ENCODE measurements at regions of chr6 and their contacts with region 1.

Region 1: GRCh38 chr6:29942275-29943052 is at the start of gene HLA-A:
- DNase-seq: peak; percentile 79
- ATAC-seq: peak; percentile 90
- H3K4me3 Mint-ChIP-seq: peak within 1 kb of the TSS; percentile 92
- H3K27ac Mint-ChIP-seq: peak within 1 kb of the TSS; percentile 100
- H3K4me1 Mint-ChIP-seq: peaks cover 69% of the 10 kb centered on the region
- H3K27me3 Mint-ChIP-seq: no peaks in the 10 kb centered on the region
- CTCF ChIP-seq: no peak
- total RNA-seq, gene HLA-A: 1,592 and 1,608 TPM in 2 replicates

Region 2: DNA sequence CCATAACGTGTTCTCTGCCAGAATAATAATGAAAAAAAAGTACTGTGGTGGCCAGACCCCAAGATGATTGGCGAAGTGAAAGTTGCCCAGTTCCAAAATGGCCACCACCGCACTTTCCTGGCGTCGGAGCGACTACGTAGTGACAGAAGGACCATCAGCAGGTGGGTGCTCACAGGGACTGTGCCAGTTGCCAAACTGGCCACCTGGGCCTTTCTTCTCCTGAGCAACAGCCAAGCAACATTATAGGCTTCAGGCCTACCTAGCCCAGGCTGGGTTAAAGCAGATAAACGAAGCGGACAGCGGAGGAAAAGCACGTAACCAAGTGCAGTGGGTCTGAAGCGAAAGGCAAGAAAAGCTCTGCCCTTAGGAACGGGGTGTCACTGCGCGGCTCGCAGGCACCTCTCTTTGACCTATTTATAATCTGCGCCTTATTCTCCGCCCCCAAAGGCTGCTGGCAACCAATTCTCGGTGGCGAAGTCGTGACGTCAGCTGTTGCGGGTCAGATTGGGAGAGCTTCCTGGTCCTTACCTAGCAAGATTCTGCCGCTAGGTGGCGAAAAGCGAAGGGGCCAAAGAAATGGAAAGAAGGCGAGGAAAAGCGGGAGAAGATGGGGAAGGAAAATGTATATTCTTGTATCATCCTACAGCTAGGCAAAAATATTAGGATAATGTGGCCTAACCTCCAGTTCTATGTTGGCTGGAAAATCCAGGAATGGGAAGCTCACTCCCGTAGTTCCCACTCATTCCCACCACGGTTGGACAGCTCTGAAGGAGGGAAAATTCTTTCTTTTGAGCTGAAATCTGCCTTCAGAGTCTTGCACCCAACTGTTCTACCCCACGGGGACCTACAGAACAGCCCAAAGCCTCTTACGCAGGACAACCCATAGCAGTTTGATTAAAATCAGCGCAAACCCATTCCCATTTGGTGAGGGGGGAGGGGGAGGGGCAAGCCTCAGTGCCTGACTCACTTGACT is 292.5 kb before region 1 on chr6:
- CTCF ChIA-PET with region 1: no interaction called
- POLR2A ChIA-PET with region 1: interaction called, 4 read pairs
- intact Hi-C with region 1: loop called (anchors 10 kb)
- DNase-seq: peak; percentile 87
- ATAC-seq: peak; percentile 94
- H3K4me3 Mint-ChIP-seq: peak overlapping the region; percentile 97
- H3K27ac Mint-ChIP-seq: peak overlapping the region; percentile 100
- H3K4me1 Mint-ChIP-seq: peaks cover 17% of the 10 kb centered on the region
- H3K27me3 Mint-ChIP-seq: no peaks in the 10 kb centered on the region
- CTCF ChIP-seq: peak; percentile 89

Region 3: DNA sequence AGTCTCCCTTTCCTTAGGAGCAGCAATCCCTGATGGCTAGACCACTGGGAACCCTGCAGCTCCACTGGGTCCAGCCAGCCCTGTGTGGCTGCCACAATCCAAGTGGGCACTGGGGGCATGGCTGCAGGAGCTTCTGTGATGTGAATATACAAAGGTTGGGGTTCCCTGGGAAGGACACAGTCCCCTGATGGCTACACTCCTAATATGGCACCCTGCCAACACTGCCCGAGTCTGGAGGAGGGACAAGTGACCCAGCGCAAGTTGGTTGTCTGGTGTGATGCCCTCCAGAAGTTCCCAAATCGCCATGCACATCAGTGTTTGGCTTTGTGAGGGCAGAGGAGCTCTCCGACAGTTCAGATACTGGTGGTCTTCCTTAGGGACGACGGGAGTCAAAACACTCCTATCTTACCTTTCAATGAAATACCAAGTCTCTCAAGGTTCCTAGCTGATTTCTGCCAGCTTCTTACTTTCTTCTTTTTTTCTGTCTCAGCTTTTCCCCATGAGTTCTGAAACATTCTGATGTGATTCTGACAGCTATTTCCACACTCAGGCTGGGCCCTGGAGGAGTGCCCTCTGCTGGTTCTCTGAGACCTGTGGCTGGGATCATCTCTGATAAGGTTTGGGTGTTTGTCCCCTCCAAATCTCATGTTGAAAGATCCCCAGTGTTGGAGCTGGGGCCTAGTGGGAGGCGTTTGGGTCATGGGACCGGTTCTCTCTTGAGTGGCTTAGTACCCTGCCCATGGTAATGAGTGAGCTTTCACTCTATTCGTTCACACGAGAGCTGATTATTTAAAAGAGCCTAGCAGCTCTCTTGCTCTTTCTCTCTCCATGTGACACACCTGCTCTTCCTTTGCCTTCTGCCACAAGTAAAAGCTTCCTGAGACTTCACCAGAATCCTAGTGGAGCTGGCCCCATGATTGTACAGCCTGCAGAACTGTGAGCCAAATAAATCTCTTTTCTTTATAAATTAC is 246.0 kb before region 1 on chr6:
- CTCF ChIA-PET with region 1: no interaction called
- POLR2A ChIA-PET with region 1: no interaction called
- intact Hi-C with region 1: no loop called
- DNase-seq: no peak
- ATAC-seq: peak; percentile 42
- H3K4me3 Mint-ChIP-seq: no peak overlapping the region
- H3K27ac Mint-ChIP-seq: no peak overlapping the region
- H3K4me1 Mint-ChIP-seq: peaks cover 4% of the 10 kb centered on the region
- H3K27me3 Mint-ChIP-seq: peaks cover 5% of the 10 kb centered on the region
- CTCF ChIP-seq: no peak

Region 4: DNA sequence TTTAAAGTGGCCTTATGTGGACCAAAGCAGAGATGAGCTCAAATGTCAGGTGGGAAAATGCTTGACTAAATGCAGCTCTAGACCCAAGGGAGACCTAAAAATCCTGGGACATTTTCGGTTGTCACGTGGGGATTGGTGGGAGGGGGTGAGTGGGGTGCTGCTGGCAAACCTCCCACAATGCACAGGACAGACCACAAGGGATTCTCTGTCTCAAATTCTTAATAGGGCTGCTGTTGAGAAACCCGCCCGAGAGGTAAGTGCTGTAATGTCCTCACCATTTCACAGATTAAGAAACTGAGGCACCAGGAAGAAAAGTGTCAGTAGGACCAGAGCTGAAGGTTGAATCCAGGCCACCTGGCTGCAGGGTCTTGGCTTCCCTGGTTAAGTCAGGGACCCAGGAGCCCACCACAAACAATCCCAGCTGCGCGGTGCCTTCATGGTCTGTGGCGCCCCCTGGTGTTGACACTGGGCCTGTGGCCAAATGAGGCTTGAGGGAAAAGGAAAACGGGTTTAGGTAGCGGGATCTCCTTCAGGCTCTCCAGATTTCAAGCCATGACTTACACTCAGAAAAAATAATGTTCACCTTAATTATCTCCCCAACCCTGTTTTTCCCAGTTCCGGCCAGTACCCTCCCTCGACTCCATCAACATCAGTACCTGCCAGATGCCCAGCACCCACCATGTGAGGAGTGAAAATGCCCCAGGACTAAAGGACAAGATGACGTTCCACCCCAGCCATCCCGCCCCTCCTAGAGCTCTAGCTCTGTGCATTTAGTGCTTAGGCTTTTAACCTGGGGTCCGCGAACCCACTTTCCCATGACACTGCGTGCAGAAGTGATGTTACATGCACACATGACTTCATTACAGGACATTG is 107.7 kb before region 1 on chr6:
- CTCF ChIA-PET with region 1: no interaction called
- POLR2A ChIA-PET with region 1: no interaction called
- intact Hi-C with region 1: no loop called
- DNase-seq: peak; percentile 45
- ATAC-seq: peak; percentile 40
- H3K4me3 Mint-ChIP-seq: no peak overlapping the region
- H3K27ac Mint-ChIP-seq: no peak overlapping the region
- H3K4me1 Mint-ChIP-seq: no peaks in the 10 kb centered on the region
- H3K27me3 Mint-ChIP-seq: peaks cover 67% of the 10 kb centered on the region
- CTCF ChIP-seq: no peak

Region 5: GRCh38 chr6:29847871-29848630 is 94.4 kb before region 1 on chr6:
- CTCF ChIA-PET with region 1: no interaction called
- POLR2A ChIA-PET with region 1: no interaction called
- intact Hi-C with region 1: loop called (anchors 1 kb)
- DNase-seq: peak; percentile 76
- ATAC-seq: peak; percentile 84
- H3K4me3 Mint-ChIP-seq: no peak overlapping the region
- H3K27ac Mint-ChIP-seq: peak overlapping the region; percentile 35
- H3K4me1 Mint-ChIP-seq: peaks cover 8% of the 10 kb centered on the region
- H3K27me3 Mint-ChIP-seq: peaks cover 50% of the 10 kb centered on the region
- CTCF ChIP-seq: peak; percentile 67

Region 6: DNA sequence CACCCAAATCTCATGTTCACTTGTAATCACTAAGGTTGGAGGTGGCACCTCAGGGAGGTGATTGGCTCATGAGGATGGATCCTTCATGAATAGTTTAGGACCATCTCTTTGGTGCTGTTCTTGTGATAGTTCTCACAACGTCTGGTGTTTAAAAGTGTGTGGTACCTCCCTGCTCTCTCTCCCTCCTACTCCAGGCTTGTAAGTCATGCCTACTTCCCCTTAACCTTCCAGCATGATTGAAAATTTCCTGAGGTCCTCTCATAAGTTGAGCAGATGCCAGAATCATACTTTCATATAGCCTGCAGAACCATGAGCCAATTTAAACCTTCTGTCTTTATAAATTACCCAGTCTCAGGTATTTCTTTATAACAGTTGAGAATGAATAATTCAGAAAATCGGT is 16.5 kb after region 1 on chr6:
- CTCF ChIA-PET with region 1: interaction called, 3 read pairs
- POLR2A ChIA-PET with region 1: interaction called, 64 read pairs
- intact Hi-C with region 1: no loop called
- DNase-seq: no peak
- ATAC-seq: peak; percentile 14
- H3K4me3 Mint-ChIP-seq: peak overlapping the region; percentile 41
- H3K27ac Mint-ChIP-seq: peak overlapping the region; percentile 70
- H3K4me1 Mint-ChIP-seq: peaks cover 35% of the 10 kb centered on the region
- H3K27me3 Mint-ChIP-seq: no peaks in the 10 kb centered on the region
- CTCF ChIP-seq: no peak

Region 7: DNA sequence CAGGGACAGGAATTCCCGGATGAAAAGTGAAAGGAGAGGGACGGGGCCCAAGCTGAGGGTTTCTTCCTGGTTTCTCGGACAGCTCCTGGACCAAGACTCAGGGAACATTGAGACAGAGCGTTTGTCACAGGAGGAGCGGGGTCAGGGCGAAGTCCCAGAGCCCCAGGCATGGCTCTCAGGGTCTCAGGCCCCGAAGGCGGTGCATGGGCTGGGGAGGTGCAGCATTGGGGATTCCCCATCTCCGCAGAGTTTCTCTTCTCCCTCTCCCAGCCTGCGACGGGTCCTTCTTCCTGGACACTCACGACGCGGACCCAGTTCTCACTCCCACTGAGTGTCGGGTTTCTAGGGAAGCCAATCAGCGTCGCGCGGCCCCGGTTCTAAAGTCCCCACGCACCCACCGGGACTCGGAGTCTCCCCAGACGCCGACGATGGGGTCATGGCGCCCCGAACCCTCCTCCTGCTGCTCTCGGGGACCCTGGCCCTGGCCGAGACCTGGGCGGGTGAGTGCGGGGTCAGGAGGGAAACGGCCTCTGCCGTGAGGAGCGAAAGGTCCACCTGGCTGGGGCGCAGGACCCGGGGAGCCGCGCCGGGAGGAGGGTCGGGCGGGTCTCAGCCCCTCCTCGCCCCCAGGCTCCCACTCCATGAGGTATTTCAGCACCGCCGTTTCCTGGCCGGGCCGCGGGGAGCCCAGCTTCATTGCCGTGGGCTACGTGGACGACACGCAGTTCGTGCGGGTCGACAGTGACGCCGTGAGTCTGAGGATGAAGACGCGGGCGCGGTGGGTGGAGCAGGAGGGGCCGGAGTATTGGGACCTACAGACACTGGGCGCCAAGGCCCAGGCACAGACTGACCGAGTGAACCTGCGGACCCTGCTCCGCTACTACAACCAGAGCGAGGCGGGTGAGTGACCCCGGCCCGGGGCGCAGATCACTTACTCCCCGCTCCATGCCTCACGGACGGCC is 64.0 kb after region 1 on chr6:
- CTCF ChIA-PET with region 1: no interaction called
- POLR2A ChIA-PET with region 1: interaction called, 5 read pairs
- intact Hi-C with region 1: loop called (anchors 1 kb)
- DNase-seq: no peak
- ATAC-seq: peak; percentile 45
- H3K4me3 Mint-ChIP-seq: peak overlapping the region; percentile 84
- H3K27ac Mint-ChIP-seq: no peak overlapping the region
- H3K4me1 Mint-ChIP-seq: peaks cover 19% of the 10 kb centered on the region
- H3K27me3 Mint-ChIP-seq: peaks cover 20% of the 10 kb centered on the region
- CTCF ChIP-seq: no peak

Region 8: GRCh38 chr6:31158140-31158862 is 1215.8 kb after region 1 on chr6 and contains the start of gene TCF19:
- CTCF ChIA-PET with region 1: no interaction called
- POLR2A ChIA-PET with region 1: no interaction called
- intact Hi-C with region 1: loop called (anchors 5 kb)
- DNase-seq: peak; percentile 98
- ATAC-seq: peak; percentile 91
- H3K4me3 Mint-ChIP-seq: peak within 1 kb of the TSS; percentile 95
- H3K27ac Mint-ChIP-seq: peak within 1 kb of the TSS; percentile 90
- H3K4me1 Mint-ChIP-seq: peaks cover 34% of the 10 kb centered on the region
- H3K27me3 Mint-ChIP-seq: no peaks in the 10 kb centered on the region
- CTCF ChIP-seq: no peak
- total RNA-seq, gene TCF19: 17.3 TPM in 2 replicates

Measured in activated B cell treated with CpG ODN at 0.5 μM for 24 hours (primary cell).